ENCODE measurements at regions of chr22 and their contacts with region 1.

Region 1: DNA sequence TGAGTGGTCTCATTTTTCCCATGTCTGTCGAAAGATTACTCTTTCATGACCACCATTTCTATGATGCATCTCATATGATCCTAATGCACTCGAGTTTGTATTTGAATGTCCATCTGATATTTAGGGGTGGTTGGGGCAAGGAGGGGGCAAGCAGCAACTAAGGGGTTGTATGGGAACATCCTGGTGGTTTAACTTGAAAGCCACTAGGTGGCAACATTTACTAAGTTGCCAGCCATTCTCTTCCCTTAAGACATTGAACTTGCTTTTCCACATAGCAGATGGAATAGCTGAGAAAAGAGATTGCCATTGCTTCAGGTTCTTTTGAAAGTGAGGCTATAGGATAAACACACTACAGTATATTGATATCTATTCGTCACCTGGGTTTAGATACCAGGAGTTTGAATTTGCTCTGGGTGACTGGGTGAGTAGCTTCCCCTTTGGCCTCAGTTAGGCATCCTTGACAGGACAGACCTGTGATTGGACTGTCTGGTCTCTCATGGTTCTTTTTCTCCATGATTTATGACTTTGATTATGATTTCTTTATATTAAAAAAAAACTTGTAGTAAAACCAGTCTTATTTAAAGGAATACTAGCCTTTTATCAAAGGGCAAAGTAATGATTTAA is 32.4 kb downstream of the NF2 start:
- DNase-seq: peak in 2 of 3 donors; percentile 26 to 37
- H3K4me3 ChIP-seq: no peak overlapping the region
- H3K4me3 Mint-ChIP-seq: no peak overlapping the region
- H3K27ac ChIP-seq: no peak overlapping the region
- H3K27ac Mint-ChIP-seq: no peak overlapping the region
- H3K4me1 ChIP-seq: peaks cover 11 to 14% of the 10 kb centered on the region in 2 donors
- H3K4me1 Mint-ChIP-seq: peaks cover 28% of the 10 kb centered on the region
- H3K27me3 ChIP-seq: no peaks in the 10 kb centered on the region
- H3K27me3 Mint-ChIP-seq: peaks cover 0 to 2% (median 0%) of the 10 kb centered on the region in 3 donors
- CTCF ChIP-seq: peak; percentile 78

Region 2: DNA sequence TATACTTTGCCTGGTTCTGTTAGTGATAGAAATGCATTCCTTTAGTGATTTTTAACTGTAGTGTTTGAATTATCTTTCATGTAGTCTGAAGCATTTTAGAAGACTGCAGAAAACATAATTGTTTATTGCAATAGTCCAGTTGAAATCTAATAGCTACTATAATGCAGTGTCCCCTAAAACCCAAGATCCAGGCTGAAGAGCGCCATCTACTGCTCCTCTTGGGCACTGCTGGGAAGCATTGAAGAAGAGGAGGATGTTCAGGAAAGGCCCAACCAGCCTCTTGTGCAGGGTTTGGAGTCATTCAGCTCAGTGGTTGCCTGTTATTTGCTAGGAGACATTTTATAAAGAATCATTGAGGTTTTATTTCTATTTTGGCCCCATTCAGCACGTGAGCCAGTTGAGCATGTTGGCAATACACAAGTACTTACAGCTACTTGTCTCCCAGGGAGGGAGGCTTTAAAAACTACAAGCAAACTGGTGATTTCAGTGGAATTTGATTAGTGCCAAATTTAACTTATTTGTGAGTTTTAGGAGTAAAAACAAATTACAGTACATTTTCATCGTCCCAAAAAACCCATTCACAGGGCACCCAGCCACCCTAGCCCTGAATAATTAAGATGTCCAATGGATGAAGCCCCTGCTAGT is 369.5 kb after region 1 on chr22:
- intact Hi-C with region 1: loop called (anchors 10 kb)
- DNase-seq: peak; percentile 39 to 60 (median 53)
- H3K4me3 ChIP-seq: no peak overlapping the region
- H3K4me3 Mint-ChIP-seq: no peak overlapping the region
- H3K27ac ChIP-seq: no peak overlapping the region
- H3K27ac Mint-ChIP-seq: peak overlapping the region in 1 of 7 donors; percentile 56
- H3K4me1 ChIP-seq: no peaks in the 10 kb centered on the region
- H3K4me1 Mint-ChIP-seq: no peaks in the 10 kb centered on the region
- H3K27me3 ChIP-seq: no peaks in the 10 kb centered on the region
- H3K27me3 Mint-ChIP-seq: no peaks in the 10 kb centered on the region
- CTCF ChIP-seq: peak; percentile 97